Calu3 (cell line): ENCODE measurements at regions of chr15 and their contacts with region 1.

Region 1: DNA sequence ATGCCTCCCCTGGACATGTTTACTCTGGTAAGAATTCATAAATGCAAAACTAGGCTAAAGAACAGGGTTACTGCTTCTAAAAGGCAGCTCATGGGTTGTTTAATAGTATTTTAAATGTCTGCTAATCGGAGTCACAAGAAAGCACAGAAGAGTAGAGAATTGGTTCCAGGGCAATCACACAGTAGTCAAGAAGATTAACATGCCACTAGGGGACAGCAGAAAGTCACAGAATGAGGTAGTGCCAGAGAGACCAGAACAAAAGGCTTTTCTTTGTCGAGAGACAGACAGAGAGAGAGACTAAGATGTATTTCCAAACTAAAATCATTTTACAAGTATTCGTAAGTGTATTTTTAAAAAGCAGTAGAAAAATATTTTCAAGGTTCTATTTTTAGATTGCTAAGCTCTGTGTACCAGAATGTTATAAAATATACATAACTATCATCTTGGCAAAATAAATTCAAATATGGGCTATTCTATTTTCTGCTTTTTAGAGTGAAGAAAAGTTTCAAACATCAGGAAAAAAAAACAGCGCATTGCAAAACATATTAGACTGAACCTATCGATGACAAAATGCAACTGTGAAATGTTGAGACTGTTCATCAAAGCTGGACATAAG is 78.3 kb upstream of the CDIN1 start:
- DNase-seq: peak; percentile 7
- H3K4me3 Mint-ChIP-seq: no peak overlapping the region
- H3K27ac Mint-ChIP-seq: no peak overlapping the region
- H3K4me1 Mint-ChIP-seq: peaks cover 19% of the 10 kb centered on the region
- H3K27me3 Mint-ChIP-seq: no peaks in the 10 kb centered on the region
- CTCF ChIP-seq: no peak

Region 2: DNA sequence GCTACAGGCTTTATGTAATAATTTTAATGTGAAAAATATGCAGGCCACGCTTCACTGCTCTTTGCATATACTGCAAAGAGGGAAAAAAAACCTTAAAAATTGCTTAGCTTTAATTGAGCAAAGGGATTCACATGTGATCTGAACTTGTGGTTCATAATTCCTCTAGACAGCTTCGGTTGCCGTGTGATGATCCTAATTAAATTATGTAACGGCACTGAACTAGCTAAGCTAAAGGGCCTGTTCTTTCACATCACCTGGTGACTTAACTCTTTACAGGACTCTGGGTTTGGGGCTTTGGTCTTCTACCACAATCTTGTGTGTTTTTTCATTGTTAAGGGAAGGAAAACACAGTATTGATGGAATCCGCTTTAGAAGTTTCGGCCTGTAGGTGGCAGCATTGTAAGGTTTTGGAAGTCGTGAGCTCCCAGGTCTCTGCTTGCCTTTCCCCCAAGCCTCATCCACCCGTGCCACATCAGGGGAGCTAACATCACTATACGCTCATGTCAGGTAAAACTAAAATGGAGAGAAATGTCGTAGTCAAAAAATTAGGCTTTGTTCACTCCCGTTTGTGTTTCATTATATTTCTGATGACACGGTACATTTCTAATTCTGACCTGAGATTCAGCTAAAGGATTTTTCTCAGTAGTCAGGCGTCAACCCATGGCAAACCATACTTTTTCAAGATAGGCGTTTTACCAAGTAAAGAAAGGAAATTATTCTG is 749.6 kb before region 1 on chr15:
- CTCF ChIA-PET with region 1: no interaction called
- intact Hi-C with region 1: loop called (anchors 10 kb)
- DNase-seq: peak; percentile 41
- H3K4me3 Mint-ChIP-seq: peak overlapping the region; percentile 28
- H3K27ac Mint-ChIP-seq: no peak overlapping the region
- H3K4me1 Mint-ChIP-seq: no peaks in the 10 kb centered on the region
- H3K27me3 Mint-ChIP-seq: no peaks in the 10 kb centered on the region
- CTCF ChIP-seq: peak; percentile 33

Region 3: GRCh38 chr15:36301947-36302346 is 199.2 kb before region 1 on chr15:
- CTCF ChIA-PET with region 1: no interaction called
- intact Hi-C with region 1: no loop called
- DNase-seq: no peak
- H3K4me3 Mint-ChIP-seq: no peak overlapping the region
- H3K27ac Mint-ChIP-seq: no peak overlapping the region
- H3K4me1 Mint-ChIP-seq: no peaks in the 10 kb centered on the region
- H3K27me3 Mint-ChIP-seq: no peaks in the 10 kb centered on the region
- CTCF ChIP-seq: no peak

Region 4: DNA sequence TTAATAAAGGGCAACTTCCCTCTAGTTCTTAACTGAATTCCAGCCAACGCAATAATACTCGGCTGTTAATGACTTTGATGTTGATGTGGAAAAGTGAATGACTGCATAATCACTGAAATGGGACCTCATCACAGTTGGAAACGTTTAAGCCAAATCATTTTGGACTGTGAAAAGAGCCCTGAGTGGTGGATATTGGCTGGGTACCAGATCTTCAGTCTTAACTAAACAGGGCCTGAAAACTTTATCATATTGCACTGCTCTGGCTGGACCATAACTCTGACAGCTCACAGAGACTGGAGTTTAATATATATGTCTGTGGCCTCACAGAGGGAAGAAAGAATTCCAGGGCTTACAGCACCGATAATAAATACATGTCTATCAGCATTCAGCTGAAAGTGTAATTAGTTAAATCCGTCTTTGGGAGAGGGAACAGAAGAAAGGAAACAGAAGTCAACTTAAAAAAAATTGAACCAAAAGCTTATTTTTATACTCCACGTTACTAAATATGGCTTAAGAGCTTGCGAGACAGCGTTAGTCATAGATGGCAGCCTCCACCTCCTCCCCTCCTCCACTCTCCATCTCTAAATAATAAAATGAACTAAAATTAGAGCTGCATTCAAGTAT is 144.1 kb before region 1 on chr15:
- CTCF ChIA-PET with region 1: no interaction called
- intact Hi-C with region 1: no loop called
- DNase-seq: no peak
- H3K4me3 Mint-ChIP-seq: no peak overlapping the region
- H3K27ac Mint-ChIP-seq: no peak overlapping the region
- H3K4me1 Mint-ChIP-seq: no peaks in the 10 kb centered on the region
- H3K27me3 Mint-ChIP-seq: no peaks in the 10 kb centered on the region
- CTCF ChIP-seq: no peak

Region 5: GRCh38 chr15:36579792-36580431 is 78.7 kb after region 1 on chr15:
- CTCF ChIA-PET with region 1: no interaction called
- intact Hi-C with region 1: loop called (anchors 10 kb)
- DNase-seq: no peak
- H3K4me3 Mint-ChIP-seq: peak overlapping the region; percentile 64
- H3K27ac Mint-ChIP-seq: peak overlapping the region; percentile 47
- H3K4me1 Mint-ChIP-seq: no peaks in the 10 kb centered on the region
- H3K27me3 Mint-ChIP-seq: no peaks in the 10 kb centered on the region
- CTCF ChIP-seq: no peak

Region 6: DNA sequence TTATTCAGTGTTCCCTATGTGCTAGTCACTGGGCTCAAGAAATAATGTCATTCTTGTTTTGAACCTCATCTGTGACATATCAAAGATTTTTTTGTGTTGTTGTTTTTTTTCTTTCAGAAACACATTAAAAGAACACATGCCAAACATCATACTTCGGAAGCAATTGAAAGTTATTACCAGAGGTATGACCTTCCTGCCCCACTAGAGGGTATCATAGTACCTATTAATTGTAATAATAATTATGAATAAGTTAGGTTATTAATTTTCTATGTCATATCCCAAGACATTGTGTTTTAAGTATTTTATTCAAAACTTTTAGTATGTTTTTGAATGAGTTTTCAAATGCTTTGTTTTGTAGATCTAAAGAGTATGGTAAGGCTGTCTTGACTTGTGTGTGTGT is 143.9 kb after region 1 on chr15:
- CTCF ChIA-PET with region 1: no interaction called
- intact Hi-C with region 1: loop called (anchors 5 kb)
- DNase-seq: no peak
- H3K4me3 Mint-ChIP-seq: no peak overlapping the region
- H3K27ac Mint-ChIP-seq: no peak overlapping the region
- H3K4me1 Mint-ChIP-seq: peaks cover 9% of the 10 kb centered on the region
- H3K27me3 Mint-ChIP-seq: no peaks in the 10 kb centered on the region
- CTCF ChIP-seq: no peak